Activated CD4-positive, alpha-beta T cell treated with anti-CD3 and anti-CD28 coated beads for 36 hours (primary cell): ENCODE measurements at regions of chr12 and their contacts with region 1.

Region 1: DNA sequence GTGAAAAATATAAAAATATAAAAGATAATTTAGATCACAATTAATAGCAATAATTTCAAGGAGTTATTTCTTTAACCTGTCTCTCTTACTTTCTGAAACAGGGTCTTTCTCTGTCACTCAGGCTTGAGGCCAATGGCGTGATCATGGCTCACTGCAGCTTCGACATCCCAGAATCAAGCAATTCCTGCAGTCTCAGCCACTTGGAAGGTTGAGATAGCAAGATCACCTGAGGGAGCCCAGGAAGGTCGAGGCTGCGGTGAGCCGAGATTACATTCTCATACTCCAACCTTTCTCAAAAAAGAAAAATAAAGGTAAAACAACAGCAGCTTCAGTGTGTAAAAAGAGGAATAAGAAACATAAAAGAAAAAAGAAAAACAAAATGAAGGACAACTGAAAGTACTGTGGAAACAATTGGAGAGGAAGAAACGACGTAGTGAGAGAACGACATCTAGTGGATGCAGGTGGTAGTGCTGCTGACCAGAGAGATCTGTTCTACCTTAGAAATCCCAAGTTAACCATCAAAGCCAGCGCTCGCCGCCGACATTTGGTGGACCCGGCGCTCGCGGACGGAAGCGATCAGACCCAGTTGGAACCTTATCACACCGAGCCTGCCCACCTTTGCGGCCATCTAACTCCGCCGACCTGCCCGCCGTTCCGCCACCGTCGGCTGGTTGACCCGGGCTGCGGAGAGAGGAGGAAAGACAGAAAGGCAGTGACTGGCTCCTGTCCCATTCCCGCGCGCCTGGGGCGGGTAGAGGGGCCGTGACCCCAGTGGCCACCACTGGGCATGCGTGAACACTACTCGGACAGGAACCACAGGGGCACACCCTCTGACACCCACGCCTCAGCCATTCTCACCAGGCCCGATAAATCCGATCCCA is 196.1 kb downstream of the ALG10 start:
- DNase-seq: peak; percentile 83
- ATAC-seq: peak; percentile 79
- H3K4me3 Mint-ChIP-seq: peak overlapping the region; percentile 75
- H3K27ac Mint-ChIP-seq: peak overlapping the region; percentile 53
- H3K4me1 Mint-ChIP-seq: peaks cover 8% of the 10 kb centered on the region
- H3K27me3 Mint-ChIP-seq: peaks cover 10% of the 10 kb centered on the region

Region 2: DNA sequence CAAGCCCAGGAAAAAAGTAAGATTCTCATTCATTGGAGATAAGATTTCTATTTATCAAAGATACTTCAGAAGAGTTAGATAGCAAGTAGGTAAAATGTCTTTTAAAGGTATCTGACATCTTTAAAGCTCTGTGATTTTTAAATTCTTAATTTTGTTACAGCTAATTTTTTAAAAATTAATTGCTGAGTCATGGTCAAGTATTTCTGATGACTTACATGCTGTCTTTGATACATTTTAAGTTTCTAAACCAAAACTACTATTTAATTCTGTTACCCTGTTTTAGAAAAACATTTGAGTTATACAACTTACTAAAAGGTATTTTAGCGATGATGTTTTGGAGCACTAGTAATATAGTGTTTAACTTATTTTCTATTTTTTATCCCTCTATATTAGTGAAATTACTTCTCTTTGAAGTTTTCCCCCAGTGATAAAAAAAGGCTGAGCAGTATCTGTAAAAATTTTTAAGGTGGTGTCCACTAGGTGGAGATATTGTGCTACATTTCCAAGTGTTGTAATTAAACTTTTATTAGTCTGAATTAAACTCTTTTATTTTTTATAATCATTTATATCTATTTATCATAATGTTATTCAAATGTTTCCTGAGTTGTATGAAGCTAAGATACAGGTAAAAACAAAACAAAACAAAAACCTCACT is 184.7 kb before region 1 on chr12:
- CTCF ChIA-PET with region 1: no interaction called
- POLR2A ChIA-PET with region 1: no interaction called
- intact Hi-C with region 1: loop called (anchors 1 to 5 kb)
- DNase-seq: no peak
- ATAC-seq: no peak
- H3K4me3 Mint-ChIP-seq: no peak overlapping the region
- H3K27ac Mint-ChIP-seq: no peak overlapping the region
- H3K4me1 Mint-ChIP-seq: no peaks in the 10 kb centered on the region
- H3K27me3 Mint-ChIP-seq: no peaks in the 10 kb centered on the region

Region 3: GRCh38 chr12:34126239-34126641 is 92.2 kb before region 1 on chr12:
- CTCF ChIA-PET with region 1: interaction called, 8 read pairs
- POLR2A ChIA-PET with region 1: no interaction called
- intact Hi-C with region 1: loop called (anchors 1 kb)
- DNase-seq: no peak
- ATAC-seq: peak; percentile 47
- H3K4me3 Mint-ChIP-seq: peak overlapping the region; percentile 26
- H3K27ac Mint-ChIP-seq: peak overlapping the region; percentile 59
- H3K4me1 Mint-ChIP-seq: peaks cover 11% of the 10 kb centered on the region
- H3K27me3 Mint-ChIP-seq: peaks cover 16% of the 10 kb centered on the region

Region 4: GRCh38 chr12:34264132-34264531 is 45.7 kb after region 1 on chr12:
- CTCF ChIA-PET with region 1: no interaction called
- POLR2A ChIA-PET with region 1: no interaction called
- intact Hi-C with region 1: loop called in 1 of 2 experiments (anchors 5 kb)
- DNase-seq: no peak
- ATAC-seq: no peak
- H3K4me3 Mint-ChIP-seq: no peak overlapping the region
- H3K27ac Mint-ChIP-seq: no peak overlapping the region
- H3K4me1 Mint-ChIP-seq: no peaks in the 10 kb centered on the region
- H3K27me3 Mint-ChIP-seq: peaks cover 2% of the 10 kb centered on the region

Region 5: GRCh38 chr12:34625116-34625515 is 406.7 kb after region 1 on chr12:
- CTCF ChIA-PET with region 1: no interaction called
- POLR2A ChIA-PET with region 1: no interaction called
- intact Hi-C with region 1: loop called in 1 of 2 experiments (anchors 10 kb)
- DNase-seq: no peak
- ATAC-seq: no peak
- H3K4me3 Mint-ChIP-seq: no peak overlapping the region
- H3K27ac Mint-ChIP-seq: no peak overlapping the region
- H3K4me1 Mint-ChIP-seq: no peaks in the 10 kb centered on the region
- H3K27me3 Mint-ChIP-seq: no peaks in the 10 kb centered on the region